Ascending aorta (tissue), 2 donors: ENCODE measurements at regions of chr14 and their contacts with region 1.

Region 1: DNA sequence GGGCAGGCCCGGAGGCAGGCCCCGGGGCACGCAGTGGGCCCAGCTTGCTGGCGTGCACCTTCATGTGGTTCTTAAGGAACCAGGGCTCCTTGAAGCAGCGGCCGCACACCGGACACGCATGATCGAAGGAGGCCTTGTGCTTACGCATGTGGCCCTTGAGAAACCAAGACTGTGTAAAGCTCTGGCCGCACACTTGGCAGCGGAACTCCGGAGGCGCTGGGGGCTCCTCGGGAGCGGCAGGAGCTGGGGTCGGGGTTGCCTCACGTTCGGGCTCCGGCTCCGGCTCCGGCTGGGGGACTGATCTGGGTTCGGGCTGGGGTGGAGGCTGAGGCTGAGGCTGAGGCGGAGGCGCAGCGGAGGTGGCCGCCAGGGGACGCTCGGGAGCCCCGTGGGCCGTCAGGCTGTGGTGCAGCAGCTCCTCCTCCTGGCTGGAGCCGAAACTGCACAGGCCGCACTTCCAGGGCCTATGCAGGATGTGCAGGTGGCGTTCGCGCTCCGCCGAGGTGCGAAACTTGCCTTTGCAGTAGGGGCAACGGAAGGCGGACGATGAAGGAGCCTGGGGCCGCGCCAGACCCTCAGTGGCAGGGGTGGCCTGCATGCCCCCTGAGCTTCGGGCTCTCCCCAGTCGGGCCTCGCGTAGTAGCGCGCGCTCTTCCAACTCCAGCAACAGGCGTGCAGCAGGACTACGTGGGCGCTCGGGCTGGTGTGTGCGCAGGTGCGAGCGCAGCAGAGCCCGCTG is 6.0 kb downstream of the ZNF219 start:
- DNase-seq: peak in 1 of 2 donors; percentile 86
- H3K4me3 ChIP-seq: no peak overlapping the region
- H3K27ac ChIP-seq: peak overlapping the region in 1 of 2 donors; percentile 36
- H3K4me1 ChIP-seq: peaks cover 0 to 8% of the 10 kb centered on the region in 2 donors
- H3K27me3 ChIP-seq: no peaks in the 10 kb centered on the region
- CTCF ChIP-seq: peak; percentile 100

Region 2: GRCh38 chr14:20461274-20462001 is 631.0 kb before region 1 on chr14 and contains the start of gene PIP4P1:
- intact Hi-C with region 1: loop called (anchors 5 kb)
- DNase-seq: peak; percentile 100
- H3K4me3 ChIP-seq: peak within 1 kb of the TSS; percentile 89 to 98
- H3K27ac ChIP-seq: peak within 1 kb of the TSS; percentile 91 to 92
- H3K4me1 ChIP-seq: peaks cover 7 to 14% of the 10 kb centered on the region in 2 donors
- H3K27me3 ChIP-seq: no peaks in the 10 kb centered on the region
- CTCF ChIP-seq: no peak
- total RNA-seq, gene PIP4P1: 30.7 TPM

Region 3: GRCh38 chr14:21014761-21015190 is 77.7 kb before region 1 on chr14:
- intact Hi-C with region 1: loop called (anchors 1 kb)
- DNase-seq: peak in 1 of 2 donors; percentile 91
- H3K4me3 ChIP-seq: no peak overlapping the region
- H3K27ac ChIP-seq: no peak overlapping the region
- H3K4me1 ChIP-seq: no peaks in the 10 kb centered on the region
- H3K27me3 ChIP-seq: no peaks in the 10 kb centered on the region
- CTCF ChIP-seq: peak; percentile 87 to 94 (median 88)

Region 4: GRCh38 chr14:21057803-21058675 is 34.4 kb before region 1 on chr14 and contains the start of gene RNASE8:
- intact Hi-C with region 1: no loop called
- DNase-seq: no peak
- H3K4me3 ChIP-seq: no peak within 1 kb of the TSS
- H3K27ac ChIP-seq: no peak within 1 kb of the TSS
- H3K4me1 ChIP-seq: no peaks in the 10 kb centered on the region
- H3K27me3 ChIP-seq: no peaks in the 10 kb centered on the region
- CTCF ChIP-seq: no peak
- total RNA-seq, gene RNASE8: not detected

Region 5: GRCh38 chr14:21071225-21072030 is 21.0 kb before region 1 on chr14:
- intact Hi-C with region 1: loop called (anchors 1 kb)
- DNase-seq: peak; percentile 72 to 95
- H3K4me3 ChIP-seq: peak overlapping the region; percentile 68 to 83
- H3K27ac ChIP-seq: peak overlapping the region; percentile 95 to 96
- H3K4me1 ChIP-seq: peaks cover 11 to 25% of the 10 kb centered on the region in 2 donors
- H3K27me3 ChIP-seq: no peaks in the 10 kb centered on the region
- CTCF ChIP-seq: no peak